ENCODE measurements at regions of chr16 and their contacts with region 1.

Region 1: DNA sequence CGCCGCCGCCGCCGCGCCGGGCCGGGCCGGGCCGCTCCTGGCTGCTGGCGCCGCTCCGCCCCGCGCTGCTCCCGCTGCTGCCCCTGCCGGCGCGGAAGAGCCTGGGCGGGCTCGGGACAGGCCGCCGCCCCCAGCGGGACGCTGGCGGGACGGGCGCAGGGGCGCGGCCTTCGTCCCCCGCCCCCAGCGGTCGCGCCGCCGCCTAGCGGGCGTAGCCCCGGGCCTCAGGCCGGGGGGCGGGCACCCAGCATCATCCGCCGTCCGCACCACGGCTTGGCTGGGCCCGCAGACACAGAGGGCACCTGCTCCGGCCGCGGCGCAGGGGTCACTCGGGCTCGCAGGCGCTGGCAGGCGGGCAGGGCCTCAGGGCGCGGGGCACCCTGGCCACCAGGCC is at the start of gene AMFR:
- DNase-seq: peak; percentile 76
- H3K4me3 Mint-ChIP-seq: peak within 1 kb of the TSS; percentile 91
- H3K27ac Mint-ChIP-seq: peak within 1 kb of the TSS; percentile 87
- H3K4me1 Mint-ChIP-seq: peaks cover 35% of the 10 kb centered on the region
- H3K27me3 Mint-ChIP-seq: no peaks in the 10 kb centered on the region
- CTCF ChIP-seq: peak; percentile 12
- total RNA-seq, gene AMFR: 97.2 and 109 TPM in 2 replicates

Region 2: DNA sequence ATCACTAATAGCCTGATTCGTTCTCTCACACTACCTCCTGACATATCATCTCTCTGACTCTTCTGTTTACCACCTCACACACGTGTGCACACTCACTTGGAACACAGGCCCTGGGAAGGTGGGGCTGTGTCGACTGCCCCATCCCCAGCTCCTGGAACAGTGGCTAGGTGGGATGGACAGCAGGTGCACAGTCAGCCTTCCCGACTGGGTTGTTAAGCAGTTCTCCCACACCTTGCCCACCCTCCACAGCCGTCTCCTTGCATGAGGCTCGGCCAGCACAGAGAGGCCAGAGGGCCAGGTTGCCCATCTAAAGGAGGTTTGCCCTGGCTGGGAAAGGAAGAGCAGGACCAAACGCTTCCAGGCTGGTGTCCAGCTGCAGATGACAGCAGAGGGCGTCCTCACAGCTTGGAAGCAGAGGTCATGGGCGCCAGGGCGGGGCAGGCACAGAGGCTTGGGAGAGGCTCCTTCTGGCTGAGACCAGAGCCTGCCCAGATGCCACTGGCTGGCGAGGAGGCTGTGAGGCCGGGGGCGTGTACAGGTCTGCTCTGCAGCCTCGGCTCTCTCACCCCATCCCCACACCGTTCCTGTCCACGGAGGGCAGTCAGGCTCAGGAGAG is 92.9 kb before region 1 on chr16:
- CTCF ChIA-PET with region 1: no interaction called
- POLR2A ChIA-PET with region 1: interaction called, 3 read pairs
- intact Hi-C with region 1: loop called (anchors 10 kb)
- DNase-seq: peak; percentile 88
- H3K4me3 Mint-ChIP-seq: no peak overlapping the region
- H3K27ac Mint-ChIP-seq: no peak overlapping the region
- H3K4me1 Mint-ChIP-seq: peaks cover 15% of the 10 kb centered on the region
- H3K27me3 Mint-ChIP-seq: no peaks in the 10 kb centered on the region
- CTCF ChIP-seq: peak; percentile 70

Region 3: DNA sequence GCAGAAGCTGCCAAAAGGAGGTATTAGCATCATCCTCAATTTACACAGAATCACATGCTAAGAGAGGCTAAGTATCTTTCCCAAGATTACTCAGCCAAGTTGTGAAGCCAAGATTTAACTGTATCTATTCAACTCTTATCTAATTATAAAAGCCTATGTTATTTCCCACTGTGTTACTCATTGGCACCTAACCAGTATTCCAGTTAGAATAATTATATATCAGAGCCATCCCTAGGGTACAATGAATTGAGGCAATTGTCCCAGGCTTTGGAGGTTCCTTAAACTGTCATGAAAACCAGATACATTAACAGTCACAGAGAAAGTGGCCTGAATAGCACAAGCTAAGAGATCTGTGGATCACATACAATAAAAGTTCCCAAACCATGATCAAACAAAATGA is 10.8 kb after region 1 on chr16:
- CTCF ChIA-PET with region 1: no interaction called
- POLR2A ChIA-PET with region 1: interaction called, 18 read pairs
- intact Hi-C with region 1: no loop called
- DNase-seq: no peak
- H3K4me3 Mint-ChIP-seq: no peak overlapping the region
- H3K27ac Mint-ChIP-seq: no peak overlapping the region
- H3K4me1 Mint-ChIP-seq: no peaks in the 10 kb centered on the region
- H3K27me3 Mint-ChIP-seq: no peaks in the 10 kb centered on the region
- CTCF ChIP-seq: no peak

Measured in MCF 10A (cell line).